ENCODE measurements at regions of chr22 and their contacts with region 1.

Region 1: DNA sequence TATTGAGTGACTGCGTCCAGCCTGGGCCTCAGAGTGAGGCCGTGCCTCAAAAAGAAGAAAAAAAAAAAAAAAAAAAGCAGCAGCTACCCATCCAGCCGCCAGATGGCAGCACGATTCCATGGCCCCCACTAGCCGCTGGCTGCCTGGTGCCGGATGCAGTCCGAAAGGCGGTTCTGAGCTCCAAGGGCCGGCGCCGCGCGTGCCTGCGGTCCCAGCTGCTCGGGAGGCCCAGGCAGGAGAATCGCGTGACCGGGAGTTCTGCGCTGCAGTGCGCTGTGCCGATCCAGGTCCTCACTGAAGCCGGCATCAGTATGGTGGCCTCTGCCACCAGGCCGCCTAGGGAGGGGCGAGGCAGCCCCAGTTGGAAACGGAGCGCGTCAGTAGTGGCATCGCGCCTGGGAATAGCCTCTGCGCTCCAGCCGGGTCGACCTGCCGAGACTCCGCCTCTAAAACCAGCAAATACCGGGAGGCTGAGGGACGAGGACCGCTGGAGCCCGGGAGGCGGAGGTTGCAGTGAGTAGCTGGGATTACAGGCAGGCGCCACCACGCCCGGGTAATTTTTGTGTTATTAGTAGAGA is 19.3 kb downstream of the SCARF2 start:
- DNase-seq: peak; percentile 76 to 78
- H3K4me3 ChIP-seq: peak overlapping the region; percentile 41
- H3K4me3 Mint-ChIP-seq: peak overlapping the region; percentile 62
- H3K27ac Mint-ChIP-seq: no peak overlapping the region
- H3K4me1 ChIP-seq: no peaks in the 10 kb centered on the region
- H3K4me1 Mint-ChIP-seq: no peaks in the 10 kb centered on the region
- H3K27me3 ChIP-seq: no peaks in the 10 kb centered on the region
- H3K27me3 Mint-ChIP-seq: no peaks in the 10 kb centered on the region
- CTCF ChIP-seq: peak; percentile 79 to 85

Region 2: GRCh38 chr22:20312396-20313191 is 105.7 kb before region 1 on chr22:
- CTCF ChIA-PET with region 1: no interaction called
- POLR2A ChIA-PET with region 1: no interaction called
- intact Hi-C with region 1: no loop called
- DNase-seq: no peak
- H3K4me3 ChIP-seq: no peak overlapping the region
- H3K4me3 Mint-ChIP-seq: no peak overlapping the region
- H3K27ac Mint-ChIP-seq: no peak overlapping the region
- H3K4me1 ChIP-seq: no peaks in the 10 kb centered on the region
- H3K4me1 Mint-ChIP-seq: no peaks in the 10 kb centered on the region
- H3K27me3 ChIP-seq: no peaks in the 10 kb centered on the region
- H3K27me3 Mint-ChIP-seq: peaks cover 2% of the 10 kb centered on the region
- CTCF ChIP-seq: no peak

Region 3: DNA sequence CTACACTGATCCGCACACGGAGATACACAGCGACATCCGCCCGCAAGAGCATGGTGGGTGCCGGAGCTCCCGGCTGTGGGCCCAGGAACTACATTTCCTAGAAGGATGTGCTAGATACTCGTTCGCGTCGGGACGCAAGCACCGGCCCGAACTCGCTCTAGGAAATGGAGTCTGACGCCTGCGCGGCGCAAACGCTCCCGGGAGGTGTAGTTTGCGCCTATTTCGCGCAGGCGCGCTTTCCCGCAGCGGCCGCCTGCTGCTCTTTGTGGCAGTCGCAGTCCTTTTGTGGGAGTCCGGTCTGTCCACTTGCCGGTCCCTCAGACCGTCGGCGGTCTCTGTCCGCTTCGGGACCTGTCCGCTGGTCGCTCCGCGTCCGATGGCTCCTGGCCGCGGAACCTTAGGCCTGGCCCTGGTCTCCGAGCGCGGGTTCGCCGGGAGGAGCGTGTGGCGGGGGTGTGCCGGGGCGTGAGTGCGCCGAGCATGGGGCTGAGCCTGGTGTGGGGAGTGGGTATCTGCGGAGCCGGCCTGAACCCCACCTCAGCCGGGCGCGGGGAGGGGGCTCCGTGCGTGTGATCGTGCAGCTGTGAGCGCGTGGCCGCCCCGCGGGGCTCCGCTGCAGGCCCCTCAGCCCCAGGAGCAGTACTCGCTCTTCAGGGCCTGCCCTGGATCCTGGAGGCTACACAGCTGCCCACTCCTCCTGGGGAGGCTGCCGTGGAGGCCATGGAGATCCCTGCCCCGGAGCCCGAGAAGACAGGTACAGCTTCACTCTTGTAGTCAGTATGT is 24.2 kb before region 1 on chr22 and contains the start of gene ZNF74:
- CTCF ChIA-PET with region 1: interaction called, 10 read pairs
- POLR2A ChIA-PET with region 1: no interaction called
- intact Hi-C with region 1: no loop called
- DNase-seq: peak; percentile 88 to 90
- H3K4me3 ChIP-seq: peak within 1 kb of the TSS; percentile 75
- H3K4me3 Mint-ChIP-seq: peak within 1 kb of the TSS; percentile 83
- H3K27ac Mint-ChIP-seq: peak within 1 kb of the TSS; percentile 75
- H3K4me1 ChIP-seq: peaks cover 9% of the 10 kb centered on the region
- H3K4me1 Mint-ChIP-seq: no peaks in the 10 kb centered on the region
- H3K27me3 ChIP-seq: no peaks in the 10 kb centered on the region
- H3K27me3 Mint-ChIP-seq: peaks cover under 1% of the 10 kb centered on the region
- CTCF ChIP-seq: no peak
- total RNA-seq, gene ZNF74: 14.5 and 15.6 TPM in 2 replicates

Region 4: DNA sequence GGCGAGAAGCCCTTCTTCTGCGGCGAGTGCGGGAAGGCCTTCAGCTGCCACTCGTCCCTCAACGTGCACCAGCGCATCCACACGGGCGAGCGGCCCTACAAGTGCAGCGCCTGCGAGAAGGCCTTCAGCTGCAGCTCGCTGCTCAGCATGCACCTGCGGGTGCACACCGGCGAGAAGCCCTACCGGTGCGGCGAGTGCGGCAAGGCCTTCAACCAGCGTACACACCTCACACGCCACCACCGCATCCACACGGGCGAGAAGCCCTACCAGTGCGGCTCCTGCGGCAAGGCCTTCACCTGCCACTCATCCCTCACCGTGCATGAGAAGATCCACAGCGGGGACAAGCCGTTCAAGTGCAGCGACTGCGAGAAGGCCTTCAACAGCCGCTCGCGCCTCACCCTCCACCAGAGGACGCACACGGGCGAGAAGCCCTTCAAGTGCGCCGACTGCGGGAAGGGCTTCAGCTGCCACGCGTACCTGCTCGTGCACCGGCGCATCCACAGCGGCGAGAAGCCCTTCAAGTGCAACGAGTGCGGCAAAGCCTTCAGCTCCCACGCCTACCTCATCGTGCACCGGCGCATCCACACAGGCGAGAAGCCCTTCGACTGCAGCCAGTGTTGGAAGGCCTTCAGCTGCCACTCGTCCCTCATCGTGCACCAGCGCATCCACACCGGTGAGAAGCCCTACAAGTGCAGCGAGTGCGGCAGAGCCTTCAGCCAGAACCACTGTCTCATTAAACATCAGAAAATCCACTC is 12.2 kb before region 1 on chr22:
- CTCF ChIA-PET with region 1: no interaction called
- POLR2A ChIA-PET with region 1: no interaction called
- intact Hi-C with region 1: no loop called
- DNase-seq: no peak
- H3K4me3 ChIP-seq: no peak overlapping the region
- H3K4me3 Mint-ChIP-seq: no peak overlapping the region
- H3K27ac Mint-ChIP-seq: no peak overlapping the region
- H3K4me1 ChIP-seq: no peaks in the 10 kb centered on the region
- H3K4me1 Mint-ChIP-seq: no peaks in the 10 kb centered on the region
- H3K27me3 ChIP-seq: no peaks in the 10 kb centered on the region
- H3K27me3 Mint-ChIP-seq: no peaks in the 10 kb centered on the region
- CTCF ChIP-seq: no peak

Region 5: GRCh38 chr22:20430720-20431510 is 12.6 kb after region 1 on chr22:
- CTCF ChIA-PET with region 1: interaction called, 17 read pairs
- POLR2A ChIA-PET with region 1: interaction called, 8 read pairs
- intact Hi-C with region 1: no loop called
- DNase-seq: peak in 1 of 2 experiments; percentile 69
- H3K4me3 ChIP-seq: peak overlapping the region; percentile 31
- H3K4me3 Mint-ChIP-seq: peak overlapping the region; percentile 75
- H3K27ac Mint-ChIP-seq: no peak overlapping the region
- H3K4me1 ChIP-seq: peaks cover 10% of the 10 kb centered on the region
- H3K4me1 Mint-ChIP-seq: peaks cover 5% of the 10 kb centered on the region
- H3K27me3 ChIP-seq: peaks cover 3% of the 10 kb centered on the region
- H3K27me3 Mint-ChIP-seq: peaks cover 10% of the 10 kb centered on the region
- CTCF ChIP-seq: peak; percentile 41 to 42

Region 6: GRCh38 chr22:20456064-20456721 is 37.9 kb after region 1 on chr22:
- CTCF ChIA-PET with region 1: interaction called, 94 read pairs
- POLR2A ChIA-PET with region 1: no interaction called
- intact Hi-C with region 1: loop called (anchors 1 kb)
- DNase-seq: peak; percentile 70 to 80
- H3K4me3 ChIP-seq: no peak overlapping the region
- H3K4me3 Mint-ChIP-seq: no peak overlapping the region
- H3K27ac Mint-ChIP-seq: no peak overlapping the region
- H3K4me1 ChIP-seq: no peaks in the 10 kb centered on the region
- H3K4me1 Mint-ChIP-seq: peaks cover 8% of the 10 kb centered on the region
- H3K27me3 ChIP-seq: no peaks in the 10 kb centered on the region
- H3K27me3 Mint-ChIP-seq: no peaks in the 10 kb centered on the region
- CTCF ChIP-seq: peak; percentile 87 to 91

Region 7: DNA sequence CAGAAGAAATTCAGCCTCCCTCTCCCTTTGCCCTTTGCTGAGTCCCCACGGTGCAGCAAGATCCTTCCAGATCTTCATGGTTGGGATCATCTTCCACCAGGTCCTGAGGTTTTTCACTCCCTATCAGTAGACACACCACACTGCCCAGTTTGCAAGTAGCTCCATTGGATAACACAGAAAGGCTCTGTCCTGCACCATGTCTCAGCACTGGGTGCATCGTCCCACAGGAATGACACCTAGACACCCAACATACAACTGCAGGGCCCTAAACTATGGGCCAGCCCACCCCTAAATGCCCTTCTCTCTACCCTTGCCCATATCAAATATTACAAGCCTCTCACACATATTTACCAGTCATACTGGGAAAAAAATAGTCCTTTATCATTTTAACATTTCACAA is 67.9 kb after region 1 on chr22:
- CTCF ChIA-PET with region 1: interaction called, 11 read pairs
- POLR2A ChIA-PET with region 1: no interaction called
- intact Hi-C with region 1: no loop called
- DNase-seq: no peak
- H3K4me3 ChIP-seq: no peak overlapping the region
- H3K4me3 Mint-ChIP-seq: no peak overlapping the region
- H3K27ac Mint-ChIP-seq: no peak overlapping the region
- H3K4me1 ChIP-seq: no peaks in the 10 kb centered on the region
- H3K4me1 Mint-ChIP-seq: no peaks in the 10 kb centered on the region
- H3K27me3 ChIP-seq: no peaks in the 10 kb centered on the region
- H3K27me3 Mint-ChIP-seq: no peaks in the 10 kb centered on the region
- CTCF ChIP-seq: no peak

Region 8: DNA sequence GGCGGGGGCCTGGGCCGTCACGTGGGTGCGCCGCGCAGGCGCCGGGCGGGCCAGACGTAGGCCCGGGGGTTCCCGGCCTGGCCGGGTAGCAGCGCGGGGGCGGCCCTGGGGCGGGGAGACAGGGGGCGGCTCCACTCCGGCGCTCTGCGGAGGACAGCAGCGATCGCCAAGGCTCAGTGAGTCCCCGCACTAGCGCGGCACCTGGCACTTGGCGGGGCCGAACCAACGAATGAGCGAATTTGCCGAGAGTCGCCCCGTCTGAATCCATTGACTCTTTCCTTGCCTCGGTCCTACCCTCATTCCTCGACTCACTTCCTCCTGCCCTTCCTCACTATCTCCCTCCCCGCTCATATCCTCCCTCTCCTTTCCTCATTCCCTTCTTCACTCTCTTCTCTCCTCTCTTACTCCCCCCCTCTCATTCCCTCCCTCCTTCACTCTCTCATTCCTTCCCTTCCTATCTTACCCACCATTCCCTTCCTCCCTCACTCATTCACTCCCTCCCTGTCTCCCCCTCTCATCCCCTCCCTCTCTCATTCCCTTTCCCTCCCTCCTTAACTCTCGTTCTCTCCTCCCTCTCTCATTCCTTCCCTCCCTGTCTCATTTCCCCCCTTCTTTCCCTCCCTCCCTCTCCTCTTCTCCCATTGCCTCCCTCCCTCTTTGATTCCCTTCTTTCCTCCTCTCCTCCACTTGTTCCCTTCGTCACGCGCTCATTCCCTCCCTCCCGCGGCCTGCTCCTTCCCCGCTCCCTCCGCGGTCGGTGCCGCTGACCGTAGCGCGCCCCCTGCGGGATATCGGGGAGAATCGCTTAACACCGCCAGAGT is 77.8 kb after region 1 on chr22:
- CTCF ChIA-PET with region 1: interaction called, 7 read pairs
- POLR2A ChIA-PET with region 1: interaction called, 8 read pairs
- intact Hi-C with region 1: loop called (anchors 1 kb)
- DNase-seq: peak; percentile 88 to 95
- H3K4me3 ChIP-seq: peak overlapping the region; percentile 53
- H3K4me3 Mint-ChIP-seq: peak overlapping the region; percentile 98
- H3K27ac Mint-ChIP-seq: peak overlapping the region; percentile 86
- H3K4me1 ChIP-seq: no peaks in the 10 kb centered on the region
- H3K4me1 Mint-ChIP-seq: peaks cover 6% of the 10 kb centered on the region
- H3K27me3 ChIP-seq: no peaks in the 10 kb centered on the region
- H3K27me3 Mint-ChIP-seq: no peaks in the 10 kb centered on the region
- CTCF ChIP-seq: peak; percentile 80 to 87

Region 9: GRCh38 chr22:20568989-20569769 is 150.9 kb after region 1 on chr22:
- CTCF ChIA-PET with region 1: interaction called, 22 read pairs
- POLR2A ChIA-PET with region 1: no interaction called
- intact Hi-C with region 1: no loop called
- DNase-seq: peak; percentile 57 to 69
- H3K4me3 ChIP-seq: no peak overlapping the region
- H3K4me3 Mint-ChIP-seq: no peak overlapping the region
- H3K27ac Mint-ChIP-seq: peak overlapping the region; percentile 67
- H3K4me1 ChIP-seq: peaks cover 13% of the 10 kb centered on the region
- H3K4me1 Mint-ChIP-seq: peaks cover 6% of the 10 kb centered on the region
- H3K27me3 ChIP-seq: no peaks in the 10 kb centered on the region
- H3K27me3 Mint-ChIP-seq: no peaks in the 10 kb centered on the region
- CTCF ChIP-seq: no peak